Motor neuron (in vitro differentiated cells): ENCODE measurements at regions of chr1 and their contacts with region 1.

Region 1: DNA sequence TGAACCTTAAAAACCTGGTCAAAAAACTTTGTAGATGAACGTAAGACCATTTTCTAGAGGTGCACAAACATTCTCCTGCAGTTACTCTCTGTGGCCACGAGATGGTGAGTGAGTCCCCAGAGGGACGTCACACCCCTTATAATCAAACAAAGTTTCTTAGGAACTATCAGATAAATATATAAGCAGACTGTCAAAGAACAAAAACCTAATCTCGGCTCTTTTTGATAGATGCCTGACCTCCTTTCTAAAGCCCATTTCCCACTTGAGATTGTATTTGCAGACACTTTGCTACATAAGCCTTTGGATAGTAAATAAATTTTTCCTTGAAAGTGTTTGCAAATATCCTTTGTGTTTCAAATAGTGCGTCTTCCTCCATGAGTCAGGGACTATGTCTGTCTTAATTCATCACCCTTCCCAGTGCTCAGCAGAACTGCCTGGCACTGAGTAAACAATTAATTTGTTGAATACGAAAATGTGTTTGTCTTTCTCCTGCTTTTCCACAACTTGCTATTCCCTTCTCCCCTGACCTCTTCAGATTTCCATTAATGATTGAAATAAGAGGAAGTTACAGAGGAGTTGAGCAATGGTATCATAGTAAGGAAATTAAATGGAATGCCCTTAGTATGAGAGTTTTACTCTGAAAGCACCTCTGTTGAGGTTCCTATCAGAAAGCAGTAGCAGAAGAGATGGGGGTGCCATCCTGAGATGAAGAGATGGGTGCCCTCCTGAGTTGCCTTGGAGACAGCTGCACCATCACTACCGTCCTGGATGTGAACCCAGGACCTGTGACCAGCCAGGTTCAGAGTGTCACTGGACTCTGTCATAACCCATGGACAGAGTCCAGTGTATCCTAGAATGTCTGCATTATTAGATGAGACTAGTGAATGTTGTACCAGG is 57.8 kb upstream of the RAVER2 start:
- ATAC-seq: peak in 7 of 8 experiments; percentile 36 to 67 (median 48)
- H3K4me3 ChIP-seq: no peak overlapping the region
- H3K27ac ChIP-seq: no peak overlapping the region
- H3K4me1 ChIP-seq: peaks cover 16 to 23% of the 10 kb centered on the region in 2 donors

Region 2: DNA sequence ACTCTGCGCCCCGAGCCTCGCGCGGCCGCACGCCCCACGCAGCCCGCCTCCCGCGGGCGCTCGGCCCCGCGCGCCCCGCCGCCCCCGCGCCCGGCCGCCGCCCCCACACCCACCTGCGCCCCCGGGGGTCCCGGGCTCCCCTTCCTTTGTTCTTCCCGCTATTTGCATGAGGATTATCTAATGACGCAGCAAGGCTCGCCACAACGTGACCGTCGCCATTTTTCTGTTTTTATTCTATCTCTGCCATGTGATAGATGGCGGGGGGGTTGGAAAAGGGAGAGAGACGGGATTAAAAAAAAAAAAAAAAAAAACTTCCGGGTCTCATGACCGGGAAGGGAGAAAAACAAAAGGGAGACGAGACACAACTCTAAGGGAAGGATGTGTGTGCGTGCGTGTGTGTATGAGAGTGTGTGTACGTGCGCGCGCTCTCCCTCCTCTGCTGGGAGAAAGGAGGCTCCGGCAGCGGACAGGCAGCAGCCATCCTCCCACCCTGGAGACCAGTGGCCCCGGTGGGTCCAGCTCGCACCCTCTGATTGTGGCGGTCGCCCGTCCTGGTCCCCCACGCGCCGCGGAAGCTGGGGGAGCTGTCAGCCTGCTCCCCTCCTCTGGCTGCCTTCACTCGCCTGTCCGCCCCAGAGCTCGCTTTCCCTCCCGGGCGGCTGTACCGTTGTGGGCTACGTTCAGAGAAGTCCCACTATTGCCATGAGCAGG is 380.6 kb after region 1 on chr1:
- in situ Hi-C with region 1: loop called in 1 of 9 experiments (anchors 25 kb)
- ATAC-seq: peak; percentile 24 to 73 (median 64)
- H3K4me3 ChIP-seq: peak overlapping the region; percentile 76 to 100 (median 93)
- H3K27ac ChIP-seq: peak overlapping the region; percentile 95 to 96
- H3K4me1 ChIP-seq: peaks cover 17 to 19% of the 10 kb centered on the region in 2 donors